Heart right ventricle (tissue), 16 donors: ENCODE measurements at regions of chr22 and their contacts with region 1.

Region 1: DNA sequence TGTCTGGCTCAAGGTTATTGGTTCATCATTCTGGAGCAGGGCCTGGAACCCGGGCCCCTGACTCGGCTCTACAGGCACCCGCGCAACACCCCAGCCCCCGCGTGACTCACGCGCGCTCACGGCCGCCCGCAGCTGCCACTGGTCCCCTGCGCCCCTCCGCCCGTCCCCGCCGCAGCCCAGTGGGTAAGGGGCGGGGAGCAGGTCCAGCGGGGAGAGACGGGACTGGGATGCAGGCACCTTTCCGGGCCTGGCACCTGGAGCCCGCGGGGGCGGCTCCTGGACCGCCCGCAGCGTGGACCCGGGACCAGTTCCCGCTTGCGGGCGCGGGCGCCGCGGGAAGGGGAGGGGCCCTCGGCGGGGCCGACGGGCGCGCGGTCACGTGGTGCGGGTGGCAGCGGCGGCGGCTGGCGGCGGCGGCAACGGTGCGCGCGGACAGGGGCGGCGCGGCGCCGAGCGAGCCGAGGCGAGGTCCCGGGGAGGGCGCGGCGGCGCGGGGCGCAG is 7.2 kb downstream of the SEPTIN3 start:
- DNase-seq: peak in 1 of 2 donors; percentile 34
- ATAC-seq: peak in 2 of 8 donors; percentile 42 to 71
- H3K4me3 ChIP-seq: peak overlapping the region in 9 of 10 donors; percentile 21 to 54 (median 47)
- H3K27ac ChIP-seq: no peak overlapping the region
- H3K4me1 ChIP-seq: peaks cover 0 to 6% (median 5%) of the 10 kb centered on the region in 9 donors
- H3K27me3 ChIP-seq: peaks cover 0 to 69% (median 65%) of the 10 kb centered on the region in 7 donors
- CTCF ChIP-seq: no peak

Region 2: GRCh38 chr22:41998361-41999275 is 22.2 kb after region 1 on chr22 and contains the start of gene WBP2NL:
- intact Hi-C with region 1: no loop called
- DNase-seq: peak; percentile 79 to 80
- ATAC-seq: peak; percentile 92 to 98 (median 97)
- H3K4me3 ChIP-seq: peak within 1 kb of the TSS in 9 of 10 donors; percentile 30 to 60 (median 56)
- H3K27ac ChIP-seq: peak within 1 kb of the TSS in 1 of 10 donors; percentile 75
- H3K4me1 ChIP-seq: peaks cover 0 to 11% (median 0%) of the 10 kb centered on the region in 9 donors
- H3K27me3 ChIP-seq: peaks cover 0 to 16% (median 0%) of the 10 kb centered on the region in 7 donors
- CTCF ChIP-seq: no peak
- total RNA-seq, gene WBP2NL: 0.09 to 0.81 (median 0.21) TPM in 5 of 10 donors, not detected in the others

Region 3: GRCh38 chr22:42022162-42022835 is 45.8 kb after region 1 on chr22:
- intact Hi-C with region 1: loop called in 1 of 10 experiments (anchors 1 kb)
- DNase-seq: no peak
- ATAC-seq: no peak
- H3K4me3 ChIP-seq: no peak overlapping the region
- H3K27ac ChIP-seq: no peak overlapping the region
- H3K4me1 ChIP-seq: peaks cover 0 to 12% (median 0%) of the 10 kb centered on the region in 9 donors
- H3K27me3 ChIP-seq: peaks cover 0 to 8% (median 0%) of the 10 kb centered on the region in 7 donors
- CTCF ChIP-seq: no peak

Region 4: GRCh38 chr22:42033263-42034181 is 57.1 kb after region 1 on chr22:
- intact Hi-C with region 1: no loop called
- DNase-seq: no peak
- ATAC-seq: no peak
- H3K4me3 ChIP-seq: no peak overlapping the region
- H3K27ac ChIP-seq: no peak overlapping the region
- H3K4me1 ChIP-seq: no peaks in the 10 kb centered on the region
- H3K27me3 ChIP-seq: no peaks in the 10 kb centered on the region
- CTCF ChIP-seq: no peak

Region 5: GRCh38 chr22:42444077-42444904 is 467.8 kb after region 1 on chr22:
- intact Hi-C with region 1: loop called in 1 of 10 experiments (anchors 10 kb)
- DNase-seq: peak; percentile 83 to 84
- ATAC-seq: peak; percentile 72 to 88 (median 83)
- H3K4me3 ChIP-seq: peak overlapping the region; percentile 14 to 53 (median 44)
- H3K27ac ChIP-seq: peak overlapping the region in 9 of 10 donors; percentile 57 to 85 (median 71)
- H3K4me1 ChIP-seq: peaks cover 3 to 39% (median 26%) of the 10 kb centered on the region in 9 donors
- H3K27me3 ChIP-seq: peaks cover 0 to 36% (median 9%) of the 10 kb centered on the region in 7 donors
- CTCF ChIP-seq: peak; percentile 24 to 68 (median 64)

Region 6: DNA sequence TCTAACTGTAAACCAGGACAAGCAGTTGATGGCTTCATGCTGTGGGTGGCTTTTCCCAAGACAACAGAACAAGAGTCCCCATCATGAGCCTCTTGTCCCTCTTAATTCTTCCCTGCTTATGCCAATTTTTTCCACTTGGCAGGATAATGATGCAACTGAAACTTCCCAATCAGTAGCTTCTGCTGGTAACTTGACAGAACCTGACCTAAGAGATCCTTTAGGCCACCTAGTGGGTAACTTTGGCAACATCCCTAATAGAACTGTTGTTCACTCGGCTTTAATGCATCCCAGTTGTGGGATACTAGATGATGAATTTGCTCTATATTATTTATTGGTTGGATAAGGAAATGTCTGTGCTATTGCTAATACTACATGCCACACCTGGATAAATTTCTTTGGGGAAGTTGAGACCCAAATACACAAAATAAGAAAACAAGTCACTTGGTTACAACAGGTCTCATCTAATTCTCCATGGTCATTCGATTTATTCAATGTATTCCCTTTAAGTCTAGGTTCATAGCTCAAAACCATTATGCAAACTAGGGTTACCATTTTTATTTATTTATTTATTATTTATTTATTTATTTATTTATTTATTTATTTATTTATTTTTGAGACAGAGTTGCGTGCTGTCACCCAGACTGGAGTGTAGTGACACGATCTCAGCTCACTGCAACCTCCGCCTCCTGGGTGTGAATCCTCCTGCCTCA is 497.2 kb after region 1 on chr22:
- intact Hi-C with region 1: loop called in 1 of 10 experiments (anchors 10 kb)
- DNase-seq: peak in 1 of 2 donors; percentile 12
- ATAC-seq: peak in 4 of 8 donors; percentile 23 to 62 (median 54)
- H3K4me3 ChIP-seq: no peak overlapping the region
- H3K27ac ChIP-seq: no peak overlapping the region
- H3K4me1 ChIP-seq: no peaks in the 10 kb centered on the region
- H3K27me3 ChIP-seq: no peaks in the 10 kb centered on the region
- CTCF ChIP-seq: peak; percentile 41 to 70 (median 64)